Left lung (tissue), 14 donors: ENCODE measurements at regions of chr6 and their contacts with region 1.

Region 1: DNA sequence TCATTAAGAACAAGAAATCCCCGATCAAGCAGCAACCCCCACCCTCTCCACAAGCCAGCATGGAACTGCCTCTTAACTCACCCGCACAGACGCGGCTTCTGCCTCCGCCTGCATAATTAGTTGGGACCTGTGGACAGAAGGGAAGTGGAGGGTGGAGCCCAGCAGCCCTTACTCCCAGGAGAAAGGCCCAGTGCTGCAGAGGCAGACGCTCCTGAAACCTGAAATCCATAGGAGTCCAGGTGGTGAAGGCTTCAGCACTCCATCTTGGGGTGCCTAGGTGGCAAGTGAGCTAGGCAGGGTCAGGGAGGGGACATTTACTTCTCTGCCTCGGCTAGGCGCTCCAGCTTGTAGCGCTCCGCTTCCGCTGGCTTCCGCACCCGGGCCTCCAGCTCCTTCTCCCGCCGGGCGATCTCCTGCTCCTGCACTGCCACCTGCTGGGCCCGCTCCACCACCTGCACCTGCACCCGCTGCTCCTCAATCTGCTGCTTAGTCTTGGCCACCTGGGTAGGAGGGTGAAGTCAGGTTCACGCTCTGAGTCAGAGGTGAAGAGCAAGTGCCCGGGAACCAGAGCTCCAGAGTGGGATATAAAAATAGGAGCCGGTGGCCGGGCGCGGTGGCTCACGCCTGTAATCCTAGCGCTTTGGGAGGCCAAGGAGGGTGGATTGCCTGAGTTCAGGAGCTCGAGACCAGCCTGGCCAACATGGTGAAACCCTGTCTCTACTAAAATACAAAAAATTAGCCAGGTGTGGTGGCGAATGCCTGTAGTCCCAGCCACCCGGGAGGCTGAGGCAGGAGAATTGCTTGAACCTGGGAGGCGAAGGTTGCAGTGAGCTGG is 10.7 kb downstream of the TUBB start:
- DNase-seq: peak in 3 of 4 donors; percentile 71 to 93 (median 84)
- ATAC-seq: peak; percentile 96
- H3K4me3 ChIP-seq: no peak overlapping the region
- H3K27ac ChIP-seq: no peak overlapping the region
- H3K4me1 ChIP-seq: peaks cover 0 to 56% of the 10 kb centered on the region in 2 donors
- H3K27me3 ChIP-seq: no peaks in the 10 kb centered on the region
- CTCF ChIP-seq: peak; percentile 40 to 61

Region 2: DNA sequence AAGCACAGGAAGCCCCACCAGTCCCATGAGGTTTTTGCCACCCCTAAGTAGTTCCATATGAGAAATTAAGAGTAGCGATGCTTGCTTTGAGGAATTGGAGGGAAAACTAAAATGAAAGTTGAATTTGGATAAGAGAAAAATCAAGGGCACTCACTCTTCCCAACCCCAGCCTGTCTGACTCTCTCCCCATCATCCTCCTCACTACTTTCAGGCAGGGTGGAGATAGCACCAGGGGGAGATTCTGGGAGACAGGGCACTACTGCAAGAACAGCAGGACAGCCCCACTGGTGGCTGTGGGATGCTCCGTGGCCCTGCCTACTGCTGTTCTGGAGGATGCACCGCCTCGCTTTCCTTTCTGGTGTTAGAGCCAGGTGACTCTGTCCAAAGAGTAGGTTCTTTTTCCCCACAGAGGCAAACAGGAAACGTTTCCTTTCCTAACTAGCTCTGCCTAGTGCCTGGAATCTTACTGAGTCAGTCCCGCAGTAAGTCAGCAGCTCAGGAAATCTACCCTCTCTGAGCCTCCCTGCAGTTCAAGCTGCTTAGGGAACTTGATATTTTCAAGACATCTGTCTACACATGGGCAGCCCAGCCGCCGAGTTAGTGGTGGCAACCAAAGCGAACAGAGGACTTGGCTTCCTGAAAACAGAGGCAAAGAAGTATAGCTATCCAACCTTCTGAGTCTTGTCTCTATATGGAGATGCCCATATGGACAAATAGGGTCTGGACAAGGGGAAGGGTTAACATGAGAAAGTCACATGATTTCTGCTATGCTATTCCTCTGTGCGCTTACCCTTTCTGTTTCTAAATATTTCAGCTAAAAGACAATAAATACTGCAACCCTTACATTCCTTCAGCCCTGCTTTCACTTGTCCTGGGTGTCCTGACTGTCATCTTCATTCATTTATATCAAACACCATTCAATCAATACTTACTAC is 230.1 kb before region 1 on chr6:
- intact Hi-C with region 1: no loop called
- DNase-seq: no peak
- ATAC-seq: peak; percentile 35
- H3K4me3 ChIP-seq: no peak overlapping the region
- H3K27ac ChIP-seq: peak overlapping the region; percentile 20 to 74
- H3K4me1 ChIP-seq: peaks cover 5 to 46% of the 10 kb centered on the region in 2 donors
- H3K27me3 ChIP-seq: no peaks in the 10 kb centered on the region
- CTCF ChIP-seq: no peak

Region 3: GRCh38 chr6:30686908-30687658 is 43.7 kb before region 1 on chr6:
- intact Hi-C with region 1: loop called in 1 of 2 experiments (anchors 10 kb)
- DNase-seq: peak; percentile 90 to 99 (median 96)
- ATAC-seq: peak; percentile 71
- H3K4me3 ChIP-seq: peak overlapping the region; percentile 53 to 91
- H3K27ac ChIP-seq: peak overlapping the region; percentile 96 to 97
- H3K4me1 ChIP-seq: peaks cover 14 to 45% of the 10 kb centered on the region in 2 donors
- H3K27me3 ChIP-seq: no peaks in the 10 kb centered on the region
- CTCF ChIP-seq: no peak

Region 4: GRCh38 chr6:31107052-31107451 is 376.2 kb after region 1 on chr6:
- intact Hi-C with region 1: no loop called
- DNase-seq: no peak
- ATAC-seq: no peak
- H3K4me3 ChIP-seq: no peak overlapping the region
- H3K27ac ChIP-seq: no peak overlapping the region
- H3K4me1 ChIP-seq: no peaks in the 10 kb centered on the region
- H3K27me3 ChIP-seq: peaks cover 0 to 3% of the 10 kb centered on the region in 2 donors
- CTCF ChIP-seq: no peak